Prostate gland (tissue), 2 donors: ENCODE measurements at regions of chr5 and their contacts with region 1.

Region 1: DNA sequence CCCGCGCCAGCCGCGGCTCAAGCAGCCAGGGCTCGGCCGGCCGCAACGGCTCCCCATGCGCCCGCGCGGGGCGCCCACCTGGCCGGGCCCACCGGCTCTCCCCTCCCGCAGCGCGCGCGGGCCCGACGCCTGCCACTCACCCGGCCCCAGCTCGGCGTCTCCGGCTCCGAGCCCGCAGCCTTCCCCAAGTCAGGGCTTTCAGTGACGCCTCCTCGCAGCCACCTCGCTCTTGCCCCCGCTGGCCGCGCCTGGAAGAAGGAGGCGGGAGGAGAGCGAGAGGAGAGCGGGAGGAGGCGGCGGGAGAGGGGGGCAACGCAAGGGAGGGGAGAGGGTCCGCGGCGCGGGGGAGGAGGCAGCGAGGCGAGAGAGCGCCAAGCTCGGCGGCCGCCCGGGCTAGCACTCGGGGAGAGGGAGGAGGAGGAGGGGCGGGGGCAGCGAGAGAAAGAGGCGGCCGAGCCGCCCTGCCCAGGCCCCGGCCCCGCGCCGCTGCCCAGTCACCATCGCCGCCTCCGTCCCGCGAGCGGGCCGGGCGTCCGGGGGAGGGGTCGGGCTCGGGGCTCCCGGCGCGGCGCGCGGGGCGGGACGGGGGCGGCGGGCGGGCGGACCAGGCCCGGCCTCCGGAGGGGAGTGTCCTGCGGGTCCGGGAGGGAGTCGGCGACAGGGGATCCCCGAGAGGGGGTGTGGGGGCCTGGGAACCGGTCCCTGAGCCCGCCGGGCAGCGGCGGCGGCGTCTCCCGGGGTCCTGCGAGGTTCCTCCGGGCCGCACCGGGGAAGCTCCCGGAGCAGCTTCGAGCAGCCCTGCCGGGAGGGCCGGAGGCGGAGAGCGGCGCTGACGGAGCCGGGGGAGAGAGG is at the start of gene LHFPL2:
- DNase-seq: peak; percentile 50
- H3K4me3 ChIP-seq: peak within 1 kb of the TSS; percentile 71 to 74
- H3K27ac ChIP-seq: peak within 1 kb of the TSS; percentile 84 to 91
- H3K4me1 ChIP-seq: no peaks in the 10 kb centered on the region
- H3K27me3 ChIP-seq: no peaks in the 10 kb centered on the region
- CTCF ChIP-seq: peak in 1 of 4 experiments; percentile 19
- POLR2A ChIP-seq: peak; percentile 26
- total RNA-seq, gene LHFPL2: 13.7 to 40.4 TPM

Region 2: DNA sequence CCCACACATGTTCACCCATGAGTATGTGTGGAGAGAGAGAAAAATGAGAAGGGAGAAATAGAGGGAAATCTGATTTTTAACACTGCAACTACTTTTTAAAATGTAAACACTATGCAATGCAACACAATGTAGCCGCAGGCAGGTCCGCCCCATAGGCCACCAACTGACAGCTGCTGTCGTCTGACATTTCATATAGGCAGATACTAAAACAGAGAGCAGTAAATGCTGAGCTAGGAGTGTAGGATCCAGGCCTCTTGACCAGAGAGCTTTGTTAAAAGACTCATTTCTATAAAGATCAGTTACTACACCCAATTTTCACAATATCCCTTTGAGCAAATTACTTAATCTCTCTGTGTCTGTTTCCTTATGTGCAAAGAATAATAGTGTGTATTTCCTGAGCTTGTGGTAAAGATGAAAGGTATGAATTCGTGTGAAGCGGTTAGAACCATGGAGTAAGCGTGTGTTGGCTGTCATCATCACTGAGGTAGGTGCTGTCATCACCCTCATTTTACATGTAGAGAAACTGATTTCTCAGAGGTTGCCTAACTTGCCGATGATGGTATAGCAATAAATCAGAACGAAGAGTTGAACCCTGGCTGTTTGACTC is 1493.3 kb before region 1 on chr5:
- intact Hi-C with region 1: no loop called
- DNase-seq: no peak
- H3K4me3 ChIP-seq: no peak overlapping the region
- H3K27ac ChIP-seq: no peak overlapping the region
- H3K4me1 ChIP-seq: no peaks in the 10 kb centered on the region
- H3K27me3 ChIP-seq: no peaks in the 10 kb centered on the region
- CTCF ChIP-seq: no peak
- POLR2A ChIP-seq: no peak

Region 3: GRCh38 chr5:78467752-78468357 is 180.7 kb before region 1 on chr5:
- intact Hi-C with region 1: loop called (anchors 5 kb)
- DNase-seq: no peak
- H3K4me3 ChIP-seq: no peak overlapping the region
- H3K27ac ChIP-seq: no peak overlapping the region
- H3K4me1 ChIP-seq: no peaks in the 10 kb centered on the region
- H3K27me3 ChIP-seq: no peaks in the 10 kb centered on the region
- CTCF ChIP-seq: peak in 3 of 4 experiments; percentile 69 to 84 (median 70)
- POLR2A ChIP-seq: no peak

Region 4: DNA sequence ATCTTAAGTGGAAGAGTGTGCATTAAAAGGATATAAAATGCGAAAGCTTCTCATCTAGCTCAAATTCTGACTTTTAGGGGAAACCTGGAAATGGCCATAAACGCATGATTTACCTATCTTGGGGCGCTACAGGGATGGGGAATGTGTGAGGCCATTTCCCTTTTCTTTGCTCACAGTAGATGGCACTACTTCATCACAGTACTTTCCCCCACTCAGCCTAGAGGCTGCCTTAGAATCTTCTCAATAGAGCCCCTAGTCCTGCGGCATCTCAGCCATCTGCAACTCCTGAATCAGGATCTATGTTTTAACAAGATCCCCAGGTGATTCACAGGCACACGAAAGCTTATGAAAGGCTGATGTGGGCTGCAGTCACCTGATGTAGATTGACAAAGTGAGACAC is 110.8 kb before region 1 on chr5:
- intact Hi-C with region 1: loop called (anchors 5 kb)
- DNase-seq: no peak
- H3K4me3 ChIP-seq: no peak overlapping the region
- H3K27ac ChIP-seq: no peak overlapping the region
- H3K4me1 ChIP-seq: no peaks in the 10 kb centered on the region
- H3K27me3 ChIP-seq: no peaks in the 10 kb centered on the region
- CTCF ChIP-seq: peak in 3 of 4 experiments; percentile 19 to 55 (median 51)
- POLR2A ChIP-seq: no peak

Region 5: GRCh38 chr5:78586251-78586650 is 62.3 kb before region 1 on chr5:
- intact Hi-C with region 1: no loop called
- DNase-seq: no peak
- H3K4me3 ChIP-seq: no peak overlapping the region
- H3K27ac ChIP-seq: no peak overlapping the region
- H3K4me1 ChIP-seq: no peaks in the 10 kb centered on the region
- H3K27me3 ChIP-seq: no peaks in the 10 kb centered on the region
- CTCF ChIP-seq: no peak
- POLR2A ChIP-seq: no peak